Vagina (tissue), 2 donors: ENCODE measurements at regions of chr6 and their contacts with region 1.

Region 1: DNA sequence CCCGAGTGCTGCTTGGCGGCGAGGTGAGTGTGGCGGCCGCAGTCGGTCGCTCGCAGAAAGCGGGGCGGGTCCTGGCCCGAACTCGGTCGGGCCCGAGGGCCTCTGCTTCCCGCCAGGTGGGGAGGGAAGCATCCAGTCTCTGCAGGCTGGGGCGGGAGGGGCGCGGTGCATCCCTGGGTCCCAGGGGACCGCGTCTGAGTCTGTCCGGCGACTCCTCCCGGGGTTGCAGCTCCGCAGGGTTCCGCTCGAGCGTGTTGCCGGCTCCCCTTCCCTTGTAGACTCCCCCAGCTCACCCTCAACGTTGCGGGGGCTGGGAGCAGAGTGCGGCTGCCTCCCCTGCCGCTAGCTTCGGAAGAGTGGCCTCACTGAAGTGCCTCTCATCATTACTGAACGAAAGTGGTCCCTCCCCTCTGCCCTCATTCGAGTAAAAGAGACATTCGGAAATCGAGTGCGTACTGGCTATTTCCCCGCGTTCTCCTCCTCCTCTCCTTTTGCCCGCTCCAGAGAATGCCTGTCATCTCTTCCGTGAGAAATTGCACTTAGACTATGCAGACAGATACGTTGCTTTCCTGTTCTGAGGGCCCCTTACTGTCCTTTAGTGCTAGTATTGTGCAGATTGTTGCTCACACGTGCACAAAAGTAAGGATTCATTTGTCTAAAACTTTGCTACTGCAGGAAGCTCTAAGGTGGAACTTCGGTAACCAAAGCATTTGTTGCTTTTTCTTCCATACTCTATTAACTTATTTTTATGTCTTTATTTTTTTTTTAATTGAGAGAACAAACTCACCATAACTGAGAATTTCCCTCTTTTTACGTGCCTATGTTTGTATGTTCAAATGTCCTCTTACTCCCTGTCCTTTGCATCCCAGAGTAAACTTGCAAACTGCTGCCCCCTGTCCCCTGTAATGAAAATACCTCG is 751 bp downstream of the MAP3K4 start:
- DNase-seq: no peak
- H3K4me3 ChIP-seq: peak overlapping the region; percentile 83 to 90
- H3K27ac ChIP-seq: peak overlapping the region; percentile 96
- H3K4me1 ChIP-seq: peaks cover 47% of the 10 kb centered on the region
- H3K27me3 ChIP-seq: no peaks in the 10 kb centered on the region
- CTCF ChIP-seq: peak in 1 of 3 experiments; percentile 23
- POLR2A ChIP-seq: peak in 1 of 2 donors; percentile 7

Region 2: DNA sequence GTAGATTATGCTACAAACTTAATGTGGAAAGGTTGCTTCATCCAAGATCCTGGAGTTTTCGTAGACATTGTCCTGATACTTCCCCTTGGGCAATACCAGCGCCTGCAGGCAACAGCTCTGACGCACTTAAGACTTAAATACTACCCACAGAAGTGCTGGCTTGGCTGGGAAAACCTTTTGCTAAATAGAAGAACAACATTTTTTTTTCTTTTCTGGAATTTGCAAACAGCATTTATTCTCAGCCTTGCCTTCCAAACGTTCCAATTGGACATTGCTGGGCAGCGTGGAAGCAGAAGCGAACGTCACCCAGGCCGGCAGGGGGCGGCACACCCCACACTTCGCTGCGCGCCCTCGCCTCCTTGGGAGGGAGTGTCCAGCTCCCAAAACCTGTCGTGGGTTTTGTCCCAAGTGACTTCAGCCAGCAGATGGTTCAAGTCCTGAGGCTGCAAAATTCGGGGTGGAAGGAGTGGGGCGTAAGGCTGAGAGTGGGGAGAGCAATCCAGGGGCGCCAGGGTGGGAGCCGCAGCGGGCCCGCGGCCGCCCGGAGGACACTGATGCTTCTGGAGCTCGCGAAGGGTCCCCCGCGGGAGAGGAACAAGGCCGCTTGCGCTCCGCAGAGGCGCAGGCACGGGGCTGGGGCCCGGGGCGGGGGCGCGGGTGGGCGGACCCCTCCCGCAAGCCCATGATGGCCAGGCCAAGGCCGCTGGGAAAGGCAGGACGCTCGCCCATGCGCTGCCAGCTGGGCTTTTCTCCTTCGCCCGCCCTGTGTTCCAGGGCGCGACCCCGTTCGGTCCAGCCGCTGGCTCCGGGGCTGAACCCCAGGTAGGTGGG is 61.6 kb before region 1 on chr6:
- intact Hi-C with region 1: loop called (anchors 5 kb)
- DNase-seq: peak in 1 of 2 donors; percentile 92
- H3K4me3 ChIP-seq: peak overlapping the region; percentile 53 to 64
- H3K27ac ChIP-seq: peak overlapping the region; percentile 72
- H3K4me1 ChIP-seq: peaks cover 10% of the 10 kb centered on the region
- H3K27me3 ChIP-seq: no peaks in the 10 kb centered on the region
- CTCF ChIP-seq: peak; percentile 77 to 95 (median 82)
- POLR2A ChIP-seq: no peak